CD4-positive, alpha-beta memory T cell (primary cell): ENCODE measurements at regions of chr3 and their contacts with region 1.

Region 1: DNA sequence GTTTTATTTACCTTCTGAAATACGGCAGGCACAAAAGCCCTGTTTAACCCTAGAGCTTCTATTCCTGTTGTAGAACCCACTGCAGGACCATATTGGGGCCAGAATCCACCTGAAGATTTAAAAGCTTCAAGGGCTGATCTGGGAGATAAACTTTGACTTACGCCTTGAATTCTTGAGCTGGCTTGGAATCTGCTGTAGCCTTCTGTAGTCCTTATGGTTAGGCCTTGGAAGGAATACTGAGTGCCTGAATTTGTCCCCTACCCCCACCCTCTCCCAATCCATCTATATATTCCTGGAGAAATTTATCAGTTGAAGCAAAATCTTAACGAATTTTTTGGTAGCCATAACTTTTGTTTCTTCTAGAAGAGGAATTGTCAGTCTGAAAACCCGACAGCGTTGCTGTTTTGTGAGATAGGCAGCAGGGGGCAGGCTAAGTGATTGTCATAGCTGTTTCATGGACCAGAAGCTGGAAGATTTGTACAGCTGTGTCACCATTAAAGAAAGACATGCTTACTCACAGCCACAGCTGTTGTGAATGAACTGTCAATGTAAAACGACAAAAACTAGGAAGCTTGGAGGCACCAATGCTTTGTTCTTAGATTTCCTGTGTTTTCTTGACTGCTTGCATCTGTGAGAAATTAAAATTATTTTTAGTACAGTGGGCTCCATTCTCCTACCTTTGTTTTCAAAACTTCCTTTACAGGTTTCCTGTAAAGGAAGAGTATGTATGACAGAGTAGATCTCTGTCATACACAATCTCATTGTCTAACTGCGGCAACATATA is 12.8 kb downstream of the LXN start:
- DNase-seq: peak in 4 of 5 donors; percentile 48 to 55 (median 51)
- H3K4me3 ChIP-seq: no peak overlapping the region
- H3K4me3 Mint-ChIP-seq: no peak overlapping the region
- H3K27ac ChIP-seq: no peak overlapping the region
- H3K27ac Mint-ChIP-seq: peak overlapping the region in 6 of 7 donors; percentile 13 to 80 (median 37)
- H3K4me1 ChIP-seq: no peaks in the 10 kb centered on the region
- H3K4me1 Mint-ChIP-seq: peaks cover 5 to 9% (median 7%) of the 10 kb centered on the region in 4 donors
- H3K27me3 ChIP-seq: no peaks in the 10 kb centered on the region
- H3K27me3 Mint-ChIP-seq: no peaks in the 10 kb centered on the region

Region 2: GRCh38 chr3:158672293-158673176 is 12.9 kb after region 1 on chr3 and contains the start of gene LXN:
- CTCF ChIA-PET with region 1: interaction called, 51 read pairs
- POLR2A ChIA-PET with region 1: interaction called, 3 read pairs
- intact Hi-C with region 1: loop called (anchors 1 kb)
- DNase-seq: peak; percentile 76 to 89 (median 79)
- H3K4me3 ChIP-seq: peak within 1 kb of the TSS; percentile 62 to 64
- H3K4me3 Mint-ChIP-seq: peak within 1 kb of the TSS; percentile 92 to 99 (median 96)
- H3K27ac ChIP-seq: peak within 1 kb of the TSS; percentile 63
- H3K27ac Mint-ChIP-seq: peak within 1 kb of the TSS; percentile 81 to 97 (median 96)
- H3K4me1 ChIP-seq: peaks cover 19% of the 10 kb centered on the region
- H3K4me1 Mint-ChIP-seq: peaks cover 12 to 32% (median 22%) of the 10 kb centered on the region in 4 donors
- H3K27me3 ChIP-seq: no peaks in the 10 kb centered on the region
- H3K27me3 Mint-ChIP-seq: no peaks in the 10 kb centered on the region
- total RNA-seq, gene LXN: 7.7 to 8.1 TPM

Region 3: DNA sequence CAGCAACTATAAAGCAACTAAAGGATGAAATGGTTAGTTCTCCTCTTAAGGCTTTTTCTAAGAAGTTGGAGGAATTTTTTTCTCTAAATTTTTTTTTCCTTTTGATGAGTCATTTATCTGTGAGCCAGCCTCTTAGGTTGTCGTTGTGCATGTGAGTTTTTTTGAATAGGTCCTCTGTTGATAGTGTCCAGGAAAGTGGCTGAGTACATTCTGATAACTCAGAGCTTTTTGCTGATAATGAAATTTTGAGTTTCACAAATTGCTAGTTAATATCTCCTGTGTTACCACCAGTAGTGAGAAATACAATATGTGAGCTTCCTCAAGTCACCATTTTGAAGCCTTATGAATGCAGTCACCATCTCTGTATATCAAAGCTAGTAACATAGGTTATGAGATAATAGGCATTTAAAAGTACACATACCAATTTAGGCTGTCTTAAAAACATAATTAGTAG is 19.9 kb after region 1 on chr3:
- CTCF ChIA-PET with region 1: interaction called, 41 read pairs
- POLR2A ChIA-PET with region 1: no interaction called
- intact Hi-C with region 1: no loop called
- DNase-seq: no peak
- H3K4me3 ChIP-seq: no peak overlapping the region
- H3K4me3 Mint-ChIP-seq: no peak overlapping the region
- H3K27ac ChIP-seq: no peak overlapping the region
- H3K27ac Mint-ChIP-seq: no peak overlapping the region
- H3K4me1 ChIP-seq: no peaks in the 10 kb centered on the region
- H3K4me1 Mint-ChIP-seq: peaks cover 0 to 2% (median 0%) of the 10 kb centered on the region in 4 donors
- H3K27me3 ChIP-seq: no peaks in the 10 kb centered on the region
- H3K27me3 Mint-ChIP-seq: no peaks in the 10 kb centered on the region

Region 4: DNA sequence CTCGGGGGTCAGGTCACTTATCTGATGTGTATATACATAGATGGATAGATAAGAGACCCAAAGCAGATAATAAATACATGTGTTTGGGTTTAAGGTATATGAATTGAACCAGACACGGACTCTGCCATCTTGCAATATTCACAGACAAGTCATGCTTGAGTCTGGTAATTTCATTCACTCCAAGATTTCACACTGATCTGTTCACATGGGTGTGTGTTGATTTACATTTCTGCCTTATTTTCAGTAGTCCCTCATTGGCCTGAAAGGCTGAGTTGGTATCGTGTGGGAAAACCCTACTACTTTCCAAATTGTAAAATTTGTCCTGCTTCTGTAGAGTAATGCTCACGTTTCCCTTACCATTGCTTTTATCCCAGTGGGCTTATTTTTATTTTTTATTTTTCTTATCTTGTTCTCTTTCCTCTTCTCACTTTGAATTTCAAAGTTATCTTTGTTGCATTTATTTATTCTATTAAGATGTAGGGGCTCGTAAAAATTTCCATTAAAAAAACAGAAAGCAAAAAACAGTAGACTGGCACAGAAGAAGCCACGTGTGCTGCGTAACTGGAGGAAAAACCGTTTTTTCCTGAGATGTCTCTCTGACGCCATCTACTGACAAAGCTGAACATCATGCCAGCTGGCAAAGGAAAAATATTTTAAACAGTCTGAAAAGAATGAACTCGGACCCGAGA is 131.4 kb after region 1 on chr3:
- CTCF ChIA-PET with region 1: interaction called, 76 read pairs
- POLR2A ChIA-PET with region 1: interaction called, 4 read pairs
- intact Hi-C with region 1: loop called (anchors 1 kb)
- DNase-seq: peak; percentile 51 to 66 (median 59)
- H3K4me3 ChIP-seq: no peak overlapping the region
- H3K4me3 Mint-ChIP-seq: peak overlapping the region; percentile 58 to 83 (median 73)
- H3K27ac ChIP-seq: no peak overlapping the region
- H3K27ac Mint-ChIP-seq: peak overlapping the region in 1 of 7 donors; percentile 36
- H3K4me1 ChIP-seq: peaks cover 7% of the 10 kb centered on the region
- H3K4me1 Mint-ChIP-seq: peaks cover 0 to 4% (median 3%) of the 10 kb centered on the region in 4 donors
- H3K27me3 ChIP-seq: no peaks in the 10 kb centered on the region
- H3K27me3 Mint-ChIP-seq: no peaks in the 10 kb centered on the region

Region 5: DNA sequence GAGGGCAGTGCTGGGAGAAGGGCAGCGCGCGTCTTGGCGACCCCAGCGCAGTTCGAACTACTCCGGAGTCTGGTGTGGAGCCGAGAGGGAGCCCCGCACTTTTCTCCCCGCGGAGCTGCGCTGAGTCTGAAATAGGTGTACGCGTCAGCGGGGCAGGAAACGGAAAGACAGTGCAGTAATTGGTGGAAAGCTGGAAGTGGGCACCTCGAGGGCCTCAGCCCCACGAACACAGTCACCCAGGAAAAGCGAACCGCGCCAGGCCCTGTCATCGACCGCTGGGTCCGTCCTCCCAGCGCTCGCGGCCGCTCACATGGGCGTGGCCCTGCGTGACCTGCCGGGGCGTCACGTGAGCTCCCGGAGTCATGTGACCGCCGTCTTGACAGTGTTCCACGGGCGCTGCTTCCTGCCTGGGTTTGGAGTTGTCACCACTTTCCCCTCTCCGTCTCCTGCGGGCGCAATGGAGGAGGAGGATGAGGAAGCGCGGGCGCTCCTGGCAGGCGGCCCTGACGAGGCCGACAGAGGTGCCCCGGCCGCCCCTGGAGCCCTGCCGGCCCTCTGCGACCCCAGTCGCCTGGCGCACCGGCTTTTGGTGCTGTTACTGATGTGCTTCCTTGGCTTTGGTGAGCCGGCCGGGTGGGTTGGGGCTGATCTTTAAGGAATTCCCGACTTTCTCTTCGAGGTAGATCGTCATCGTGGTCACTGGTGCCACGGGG is 142.2 kb after region 1 on chr3 and contains the start of gene MFSD1:
- CTCF ChIA-PET with region 1: interaction called, 21 read pairs
- POLR2A ChIA-PET with region 1: interaction called, 7 read pairs
- intact Hi-C with region 1: no loop called
- DNase-seq: peak; percentile 86 to 92 (median 88)
- H3K4me3 ChIP-seq: peak within 1 kb of the TSS; percentile 68 to 98
- H3K4me3 Mint-ChIP-seq: peak within 1 kb of the TSS; percentile 89 to 93 (median 92)
- H3K27ac ChIP-seq: peak within 1 kb of the TSS; percentile 63
- H3K27ac Mint-ChIP-seq: peak within 1 kb of the TSS; percentile 71 to 97 (median 94)
- H3K4me1 ChIP-seq: peaks cover 36% of the 10 kb centered on the region
- H3K4me1 Mint-ChIP-seq: peaks cover 24 to 41% (median 35%) of the 10 kb centered on the region in 4 donors
- H3K27me3 ChIP-seq: no peaks in the 10 kb centered on the region
- H3K27me3 Mint-ChIP-seq: no peaks in the 10 kb centered on the region
- total RNA-seq, gene MFSD1: 31.7 to 33.7 TPM